G401 (cell line): ENCODE measurements at regions of chr15 and their contacts with region 1.

Region 1: GRCh38 chr15:42933886-42934667 is 13.5 kb upstream of the TTBK2 start:
- DNase-seq: no peak

Region 2: GRCh38 chr15:42704492-42704926 is 229.6 kb before region 1 on chr15:
- in situ Hi-C with region 1: loop called (anchors 25 kb)
- DNase-seq: peak; percentile 82

Region 3: GRCh38 chr15:42800731-42801474 is 133.2 kb before region 1 on chr15:
- in situ Hi-C with region 1: loop called (anchors 25 kb)
- DNase-seq: no peak